CD8-positive, alpha-beta memory T cell (primary cell): ENCODE measurements at regions of chr3 and their contacts with region 1.

Region 1: GRCh38 chr3:128680602-128681368 is 30.2 kb upstream of the RPN1 start:
- DNase-seq: peak; percentile 94 to 97 (median 96)
- H3K4me3 ChIP-seq: peak overlapping the region; percentile 66
- H3K4me3 Mint-ChIP-seq: peak overlapping the region; percentile 92 to 96 (median 95)
- H3K27ac ChIP-seq: peak overlapping the region; percentile 76
- H3K27ac Mint-ChIP-seq: peak overlapping the region; percentile 93 to 100 (median 98)
- H3K4me1 ChIP-seq: peaks cover 18% of the 10 kb centered on the region
- H3K4me1 Mint-ChIP-seq: peaks cover 19 to 30% (median 26%) of the 10 kb centered on the region in 3 donors
- H3K27me3 ChIP-seq: no peaks in the 10 kb centered on the region
- H3K27me3 Mint-ChIP-seq: no peaks in the 10 kb centered on the region

Region 2: DNA sequence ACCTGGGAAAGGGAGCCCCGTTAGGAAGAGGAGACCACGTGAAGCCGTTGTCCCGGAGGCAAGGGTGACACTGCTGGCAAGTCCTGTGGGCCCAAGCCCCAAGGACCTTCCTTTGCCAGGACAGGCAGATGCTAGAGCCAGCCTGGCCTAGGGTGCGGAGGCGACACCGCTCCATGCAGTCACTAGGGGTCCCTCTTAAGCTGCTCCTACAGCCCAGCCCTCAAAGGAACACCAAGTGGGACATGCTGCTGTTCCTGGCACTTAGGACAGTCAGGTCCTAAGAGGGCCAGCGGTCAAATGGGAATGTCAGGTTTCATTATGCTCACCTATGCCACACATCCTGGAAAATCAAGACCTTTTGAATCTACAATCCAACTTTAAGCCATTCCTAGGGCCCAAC is 89.8 kb before region 1 on chr3:
- CTCF ChIA-PET with region 1: no interaction called
- POLR2A ChIA-PET with region 1: no interaction called
- DNase-seq: no peak
- H3K4me3 ChIP-seq: no peak overlapping the region
- H3K4me3 Mint-ChIP-seq: no peak overlapping the region
- H3K27ac ChIP-seq: no peak overlapping the region
- H3K27ac Mint-ChIP-seq: peak overlapping the region in 2 of 8 donors; percentile 55 to 60
- H3K4me1 ChIP-seq: no peaks in the 10 kb centered on the region
- H3K4me1 Mint-ChIP-seq: peaks cover 5 to 21% (median 17%) of the 10 kb centered on the region in 3 donors
- H3K27me3 ChIP-seq: no peaks in the 10 kb centered on the region
- H3K27me3 Mint-ChIP-seq: peaks cover 3 to 7% of the 10 kb centered on the region in 2 donors

Region 3: GRCh38 chr3:128650096-128651050 is 30.4 kb before region 1 on chr3 and contains the start of gene RPN1:
- CTCF ChIA-PET with region 1: interaction called, 16 read pairs
- POLR2A ChIA-PET with region 1: interaction called, 14 read pairs
- DNase-seq: peak; percentile 95 to 98 (median 97)
- H3K4me3 ChIP-seq: peak within 1 kb of the TSS; percentile 81
- H3K4me3 Mint-ChIP-seq: peak within 1 kb of the TSS; percentile 86 to 100 (median 87)
- H3K27ac ChIP-seq: peak within 1 kb of the TSS; percentile 96
- H3K27ac Mint-ChIP-seq: peak within 1 kb of the TSS; percentile 87 to 99 (median 92)
- H3K4me1 ChIP-seq: peaks cover 34% of the 10 kb centered on the region
- H3K4me1 Mint-ChIP-seq: peaks cover 35 to 61% (median 46%) of the 10 kb centered on the region in 3 donors
- H3K27me3 ChIP-seq: no peaks in the 10 kb centered on the region
- H3K27me3 Mint-ChIP-seq: peaks cover 0 to 2% of the 10 kb centered on the region in 2 donors
- total RNA-seq, gene RPN1: 188 to 194 TPM

Region 4: DNA sequence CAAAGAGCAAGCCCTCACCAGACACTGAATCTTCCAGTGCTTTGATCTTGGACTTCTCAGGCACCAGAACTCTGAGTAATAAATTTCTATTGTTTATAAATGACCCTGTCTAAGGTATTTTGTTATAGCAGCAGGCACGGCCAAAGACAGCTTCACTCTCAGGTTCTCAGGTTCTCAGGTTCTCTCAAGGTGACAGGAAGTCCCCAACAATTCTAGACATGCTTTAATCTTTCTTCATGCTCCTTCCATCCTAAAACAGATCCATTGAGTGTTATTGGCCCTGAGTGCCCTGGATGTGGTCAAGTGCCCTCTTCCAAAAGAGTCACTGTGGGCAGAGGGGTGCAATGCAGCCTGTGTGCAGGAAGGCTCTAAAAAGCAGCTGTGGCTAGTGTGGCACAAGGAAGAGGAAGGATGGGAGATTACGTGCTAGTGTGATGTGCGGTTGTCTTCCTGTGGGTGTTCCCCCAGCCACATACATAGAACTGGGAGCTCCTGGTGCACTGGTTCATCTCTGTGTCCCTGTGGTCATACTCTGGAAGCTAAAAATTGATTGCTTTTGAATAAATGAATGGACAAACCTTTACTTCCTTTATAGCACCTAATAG is 34.2 kb after region 1 on chr3:
- CTCF ChIA-PET with region 1: no interaction called
- POLR2A ChIA-PET with region 1: no interaction called
- DNase-seq: peak in 3 of 5 donors; percentile 10 to 38 (median 32)
- H3K4me3 ChIP-seq: no peak overlapping the region
- H3K4me3 Mint-ChIP-seq: peak overlapping the region in 4 of 7 donors; percentile 23 to 76 (median 62)
- H3K27ac ChIP-seq: no peak overlapping the region
- H3K27ac Mint-ChIP-seq: peak overlapping the region in 7 of 8 donors; percentile 28 to 93 (median 86)
- H3K4me1 ChIP-seq: peaks cover 17% of the 10 kb centered on the region
- H3K4me1 Mint-ChIP-seq: peaks cover 10 to 11% (median 11%) of the 10 kb centered on the region in 3 donors
- H3K27me3 ChIP-seq: no peaks in the 10 kb centered on the region
- H3K27me3 Mint-ChIP-seq: no peaks in the 10 kb centered on the region

Region 5: GRCh38 chr3:128725932-128726690 is 45.3 kb after region 1 on chr3 and contains the start of gene RAB7A:
- CTCF ChIA-PET with region 1: interaction called, 15 read pairs
- POLR2A ChIA-PET with region 1: interaction called, 3 read pairs
- DNase-seq: peak; percentile 95 to 98 (median 96)
- H3K4me3 ChIP-seq: peak within 1 kb of the TSS; percentile 91
- H3K4me3 Mint-ChIP-seq: peak within 1 kb of the TSS; percentile 89 to 99 (median 97)
- H3K27ac ChIP-seq: peak within 1 kb of the TSS; percentile 92
- H3K27ac Mint-ChIP-seq: peak within 1 kb of the TSS; percentile 86 to 99 (median 96)
- H3K4me1 ChIP-seq: peaks cover 50% of the 10 kb centered on the region
- H3K4me1 Mint-ChIP-seq: peaks cover 46 to 58% (median 56%) of the 10 kb centered on the region in 3 donors
- H3K27me3 ChIP-seq: no peaks in the 10 kb centered on the region
- H3K27me3 Mint-ChIP-seq: peaks cover 0 to 8% of the 10 kb centered on the region in 2 donors
- total RNA-seq, gene RAB7A: 260 to 285 TPM

Region 6: DNA sequence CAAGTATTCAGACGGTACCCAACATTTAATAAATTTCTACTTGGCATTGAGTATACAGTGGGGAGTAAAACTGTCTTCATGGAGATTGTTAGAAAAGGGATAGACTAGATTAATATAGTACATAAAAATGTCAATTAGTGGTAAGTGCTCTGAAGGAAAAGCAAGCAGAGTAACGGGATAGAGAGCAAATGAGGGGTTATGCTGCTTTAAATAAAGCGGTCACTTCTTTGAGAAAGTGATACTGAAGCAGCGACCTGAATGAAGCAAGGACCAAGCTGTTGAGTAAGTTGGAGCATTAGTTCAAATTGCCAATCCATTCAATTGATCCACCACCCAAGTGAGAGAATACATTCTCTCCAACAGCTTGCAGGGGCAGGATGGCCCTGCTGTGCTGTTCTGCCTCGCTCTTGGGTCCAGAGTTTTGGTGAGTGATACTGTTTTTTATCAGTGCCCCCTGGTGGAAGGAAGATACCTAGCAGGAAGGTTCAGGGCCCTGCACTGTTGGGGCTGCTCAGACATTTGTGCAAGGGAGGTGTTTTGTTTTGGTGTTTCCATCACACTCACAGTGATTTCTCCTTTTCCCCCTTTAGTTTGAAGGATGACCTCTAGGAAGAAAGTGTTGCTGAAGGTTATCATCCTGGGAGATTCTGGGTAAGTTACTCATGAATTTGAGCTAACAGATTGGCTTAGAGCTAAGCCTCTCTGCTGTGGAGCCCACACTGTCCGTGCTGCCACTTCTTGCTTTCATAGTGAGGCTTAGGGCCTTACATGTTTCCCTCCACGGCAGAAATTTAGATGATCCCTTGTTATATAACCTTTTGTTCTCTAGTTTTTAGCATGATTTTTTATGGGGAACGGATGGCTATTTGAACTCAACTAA is 114.2 kb after region 1 on chr3:
- CTCF ChIA-PET with region 1: interaction called, 65 read pairs
- POLR2A ChIA-PET with region 1: interaction called, 7 read pairs
- DNase-seq: peak; percentile 41 to 75 (median 65)
- H3K4me3 ChIP-seq: no peak overlapping the region
- H3K4me3 Mint-ChIP-seq: peak overlapping the region in 1 of 7 donors; percentile 28
- H3K27ac ChIP-seq: no peak overlapping the region
- H3K27ac Mint-ChIP-seq: peak overlapping the region; percentile 3 to 79 (median 70)
- H3K4me1 ChIP-seq: peaks cover 54% of the 10 kb centered on the region
- H3K4me1 Mint-ChIP-seq: peaks cover 34 to 59% (median 59%) of the 10 kb centered on the region in 3 donors
- H3K27me3 ChIP-seq: no peaks in the 10 kb centered on the region
- H3K27me3 Mint-ChIP-seq: no peaks in the 10 kb centered on the region

Region 7: GRCh38 chr3:128879125-128879969 is 198.6 kb after region 1 on chr3 and contains the start of gene ACAD9:
- CTCF ChIA-PET with region 1: interaction called, 4 read pairs
- POLR2A ChIA-PET with region 1: interaction called, 11 read pairs
- DNase-seq: peak; percentile 94 to 99 (median 96)
- H3K4me3 ChIP-seq: peak within 1 kb of the TSS; percentile 84
- H3K4me3 Mint-ChIP-seq: peak within 1 kb of the TSS; percentile 84 to 97 (median 87)
- H3K27ac ChIP-seq: peak within 1 kb of the TSS; percentile 93
- H3K27ac Mint-ChIP-seq: peak within 1 kb of the TSS; percentile 96 to 100 (median 98)
- H3K4me1 ChIP-seq: peaks cover 40% of the 10 kb centered on the region
- H3K4me1 Mint-ChIP-seq: peaks cover 51 to 74% (median 70%) of the 10 kb centered on the region in 3 donors
- H3K27me3 ChIP-seq: no peaks in the 10 kb centered on the region
- H3K27me3 Mint-ChIP-seq: no peaks in the 10 kb centered on the region
- total RNA-seq, gene ACAD9: 50.5 to 51.2 TPM